ENCODE measurements at regions of chr3 and their contacts with region 1.

Region 1: GRCh38 chr3:33798411-33799201 is at the start of gene PDCD6IP:
- DNase-seq: peak; percentile 88 to 96
- H3K4me3 ChIP-seq: peak within 1 kb of the TSS; percentile 90
- H3K4me1 ChIP-seq: peaks cover 19% of the 10 kb centered on the region
- H3K27me3 ChIP-seq: no peaks in the 10 kb centered on the region

Region 2: DNA sequence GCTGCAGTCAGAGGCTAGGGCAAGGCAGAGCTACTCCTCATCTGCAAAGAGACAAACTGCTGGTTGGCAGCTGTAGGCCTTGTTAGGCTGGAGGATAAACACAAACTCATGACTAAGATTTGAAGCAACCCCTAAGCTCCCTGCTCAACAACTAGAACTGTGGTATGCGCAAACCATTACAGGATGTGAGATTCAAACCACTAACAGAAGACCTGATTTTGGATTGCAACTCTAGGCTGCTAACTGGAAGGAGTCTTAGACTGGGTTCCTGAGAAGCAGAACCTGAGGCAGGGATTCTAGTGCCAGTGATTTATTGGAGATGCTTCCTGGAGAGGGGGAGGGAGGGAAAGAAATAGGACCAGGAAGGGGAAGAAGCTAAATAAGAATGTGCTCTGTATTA is 824.6 kb before region 1 on chr3:
- in situ Hi-C with region 1: loop called (anchors 25 kb)
- DNase-seq: no peak
- H3K4me3 ChIP-seq: no peak overlapping the region
- H3K4me1 ChIP-seq: no peaks in the 10 kb centered on the region
- H3K27me3 ChIP-seq: no peaks in the 10 kb centered on the region

Region 3: DNA sequence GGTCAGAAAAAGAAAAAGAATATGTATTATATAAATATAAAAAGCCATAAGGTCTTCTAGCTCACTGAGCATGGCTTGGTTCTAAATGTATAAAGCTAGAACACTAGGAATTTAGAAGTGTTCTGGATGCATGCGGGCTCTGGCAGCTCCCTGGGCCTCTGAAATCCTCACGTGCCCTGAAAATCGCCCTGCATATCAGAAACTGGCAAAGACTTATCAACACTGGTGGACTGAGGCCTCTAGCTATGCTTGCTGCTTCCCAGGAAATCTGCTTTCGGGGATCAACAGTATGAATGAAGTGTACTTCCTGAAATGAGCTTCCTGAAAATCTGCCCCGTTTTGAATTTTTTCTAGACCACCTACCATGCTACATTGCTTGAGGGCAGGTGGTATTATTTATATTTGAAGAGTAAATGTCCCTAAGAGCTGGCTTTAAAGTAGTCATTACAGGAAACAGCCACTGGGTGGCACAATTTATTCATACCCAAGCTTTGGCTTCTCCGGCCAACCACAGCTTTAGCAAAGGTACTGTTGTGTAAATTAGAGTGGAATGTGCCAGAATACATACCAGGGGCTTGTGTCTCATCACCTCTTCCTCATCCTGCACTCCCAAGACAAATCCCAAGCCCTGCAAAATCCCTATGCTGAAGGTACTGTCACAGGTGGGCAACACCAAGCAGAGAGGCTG is 667.1 kb before region 1 on chr3:
- in situ Hi-C with region 1: loop called (anchors 25 kb)
- DNase-seq: peak; percentile 78 to 90
- H3K4me3 ChIP-seq: no peak overlapping the region
- H3K4me1 ChIP-seq: peaks cover 12% of the 10 kb centered on the region
- H3K27me3 ChIP-seq: no peaks in the 10 kb centered on the region